ENCODE measurements at regions of chr21 and their contacts with region 1.

Region 1: GRCh38 chr21:45525153-45526025 is 16.9 kb downstream of the SLC19A1 start:
- DNase-seq: peak; percentile 92
- ATAC-seq: peak; percentile 92
- H3K4me3 ChIP-seq: peak overlapping the region in 1 of 3 experiments; percentile 42; a peak in 3 of 6 replicates
- H3K27ac ChIP-seq: peak overlapping the region; percentile 86
- H3K4me1 ChIP-seq: peaks cover 54% of the 10 kb centered on the region
- H3K27me3 ChIP-seq: no peaks in the 10 kb centered on the region
- CTCF ChIP-seq: peak; percentile 24
- EP300 ChIP-seq: peak in 1 of 2 experiments; percentile 53; a peak in 1 of 4 replicates
- POLR2A ChIP-seq: peak in 1 of 2 experiments; percentile 68; a peak in 2 of 4 replicates
- RAD21 ChIP-seq: no peak

Region 2: GRCh38 chr21:45294509-45295291 is 230.7 kb before region 1 on chr21:
- CTCF ChIA-PET with region 1: no interaction called
- POLR2A ChIA-PET with region 1: no interaction called
- in situ Hi-C with region 1: no loop called
- intact Hi-C with region 1: no loop called
- DNase-seq: no peak
- ATAC-seq: no peak
- H3K4me3 ChIP-seq: no peak overlapping the region
- H3K27ac ChIP-seq: peak overlapping the region; percentile 50
- H3K4me1 ChIP-seq: peaks cover 65% of the 10 kb centered on the region
- H3K27me3 ChIP-seq: no peaks in the 10 kb centered on the region; a peak in 1 of 5 replicates
- CTCF ChIP-seq: no peak
- EP300 ChIP-seq: no peak
- POLR2A ChIP-seq: no peak
- RAD21 ChIP-seq: no peak

Region 3: GRCh38 chr21:45508607-45509565 is 16.5 kb before region 1 on chr21:
- CTCF ChIA-PET with region 1: no interaction called
- POLR2A ChIA-PET with region 1: interaction called, 8 read pairs
- in situ Hi-C with region 1: no loop called
- intact Hi-C with region 1: loop called (anchors 2 kb)
- DNase-seq: peak; percentile 20
- ATAC-seq: peak; percentile 44
- H3K4me3 ChIP-seq: no peak overlapping the region
- H3K27ac ChIP-seq: peak overlapping the region; percentile 21
- H3K4me1 ChIP-seq: peaks cover 19% of the 10 kb centered on the region
- H3K27me3 ChIP-seq: no peaks in the 10 kb centered on the region
- CTCF ChIP-seq: no peak
- EP300 ChIP-seq: no peak
- POLR2A ChIP-seq: peak in 1 of 2 experiments; percentile 39; a peak in 1 of 4 replicates
- RAD21 ChIP-seq: peak; percentile 19; the same call in 1 of the 2 replicates

Region 4: GRCh38 chr21:45542667-45543370 is 17.4 kb after region 1 on chr21:
- CTCF ChIA-PET with region 1: no interaction called
- POLR2A ChIA-PET with region 1: interaction called, 15 read pairs
- in situ Hi-C with region 1: no loop called
- intact Hi-C with region 1: no loop called
- DNase-seq: no peak
- ATAC-seq: no peak
- H3K4me3 ChIP-seq: peak overlapping the region; percentile 40 to 80 (median 77); a peak in 5 of 6 replicates
- H3K27ac ChIP-seq: no peak overlapping the region
- H3K4me1 ChIP-seq: peaks cover 58% of the 10 kb centered on the region
- H3K27me3 ChIP-seq: peaks cover 3 to 30% of the 10 kb centered on the region in 2 experiments; a peak in 4 of 5 replicates
- CTCF ChIP-seq: no peak
- EP300 ChIP-seq: no peak
- POLR2A ChIP-seq: no peak
- RAD21 ChIP-seq: no peak

Region 5: DNA sequence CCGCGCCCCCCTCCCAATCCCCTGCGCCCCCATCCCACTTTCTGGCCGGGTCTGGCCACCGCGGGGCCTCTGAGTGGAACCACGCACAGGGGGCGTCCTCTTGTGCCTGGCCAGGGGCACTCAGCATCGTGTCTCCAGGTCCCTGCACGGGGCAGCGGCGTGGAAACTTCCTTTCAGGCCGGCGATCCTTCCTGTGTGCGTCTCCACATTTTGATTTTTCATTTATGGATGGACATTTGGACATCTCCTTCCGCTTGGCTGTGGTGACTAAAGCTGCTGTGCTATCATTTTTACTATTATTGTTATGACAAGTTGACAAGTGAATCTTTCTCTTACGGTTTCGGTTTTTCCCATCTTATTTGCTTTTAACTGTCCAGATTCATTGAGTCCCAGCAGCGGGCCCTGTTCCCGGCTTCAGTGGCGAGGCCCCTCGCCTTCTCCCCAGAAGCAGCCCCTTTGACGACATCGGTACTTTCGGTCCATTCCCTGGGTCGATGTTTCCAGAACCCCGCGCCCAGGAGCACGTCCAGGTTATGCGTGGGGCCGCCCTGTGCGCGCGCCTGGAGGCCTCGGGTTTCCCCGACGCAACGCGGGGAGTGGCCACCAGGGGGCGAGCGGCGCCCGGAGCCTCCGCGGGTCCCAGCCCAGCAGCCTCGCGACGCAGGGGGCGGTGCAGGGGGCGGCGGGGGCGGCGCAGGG is 29.2 kb after region 1 on chr21:
- CTCF ChIA-PET with region 1: no interaction called
- POLR2A ChIA-PET with region 1: interaction called, 13 read pairs
- in situ Hi-C with region 1: no loop called
- intact Hi-C with region 1: no loop called
- DNase-seq: peak; percentile 38
- ATAC-seq: peak; percentile 14
- H3K4me3 ChIP-seq: peak overlapping the region; percentile 61 to 71 (median 63)
- H3K27ac ChIP-seq: peak overlapping the region; percentile 8
- H3K4me1 ChIP-seq: peaks cover 33% of the 10 kb centered on the region
- H3K27me3 ChIP-seq: peaks cover 13 to 52% of the 10 kb centered on the region in 2 experiments
- CTCF ChIP-seq: peak; percentile 87
- EP300 ChIP-seq: no peak
- POLR2A ChIP-seq: no peak
- RAD21 ChIP-seq: peak; percentile 57